ENCODE measurements at regions of chr5 and their contacts with region 1.

Region 1: DNA sequence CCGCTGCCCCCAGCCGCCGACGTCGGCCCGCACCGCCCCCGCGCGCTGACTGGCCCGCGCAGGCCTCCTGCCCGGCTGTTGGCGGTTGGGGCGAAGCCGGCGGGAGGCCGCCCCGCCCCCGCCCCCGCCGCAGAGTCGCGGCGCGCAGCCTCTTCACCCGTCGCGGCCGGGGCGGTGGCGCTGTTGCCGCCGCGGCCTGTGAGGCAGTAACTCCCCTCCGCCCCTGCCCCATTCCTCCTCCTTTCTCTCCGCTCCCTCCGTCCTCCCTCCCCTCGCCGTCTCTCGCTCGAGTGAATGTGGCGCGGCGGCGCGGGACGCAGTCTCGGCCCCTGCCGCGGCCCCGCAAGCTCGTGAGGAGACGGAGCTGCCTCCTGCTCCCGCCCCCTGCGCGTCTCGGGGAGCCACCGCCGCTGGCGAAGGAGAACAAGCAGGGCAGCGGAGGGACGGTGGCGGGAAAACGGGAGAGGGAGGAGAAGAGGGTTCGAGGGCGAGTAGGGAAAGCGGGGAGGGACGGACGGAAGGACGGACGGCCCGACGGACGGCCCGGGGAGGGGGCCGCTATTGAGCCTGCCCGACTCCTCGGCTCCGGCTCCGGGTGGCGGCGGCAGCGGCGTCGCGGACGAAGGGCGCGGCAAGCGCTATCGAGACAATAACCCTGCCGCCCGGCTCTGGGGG is 637 bp upstream of the ERBIN start:
- DNase-seq: peak; percentile 75
- H3K4me3 Mint-ChIP-seq: peak overlapping the region; percentile 87
- H3K27ac Mint-ChIP-seq: peak overlapping the region; percentile 88
- H3K4me1 Mint-ChIP-seq: peaks cover 18% of the 10 kb centered on the region
- H3K27me3 Mint-ChIP-seq: peaks cover 29% of the 10 kb centered on the region

Region 2: GRCh38 chr5:65624571-65625555 is 300.9 kb before region 1 on chr5 and contains the starts of genes SHLD3 and TRAPPC13:
- intact Hi-C with region 1: loop called (anchors 2 kb)
- DNase-seq: peak; percentile 78
- H3K4me3 Mint-ChIP-seq: peak within 1 kb of the TSS; percentile 99
- H3K27ac Mint-ChIP-seq: peak within 1 kb of the TSS; percentile 99
- H3K4me1 Mint-ChIP-seq: peaks cover 25% of the 10 kb centered on the region
- H3K27me3 Mint-ChIP-seq: no peaks in the 10 kb centered on the region
- total RNA-seq, gene SHLD3: 4.2 and 5.0 TPM in 2 replicates
- total RNA-seq, gene TRAPPC13: 17.0 and 22.4 TPM in 2 replicates

Region 3: DNA sequence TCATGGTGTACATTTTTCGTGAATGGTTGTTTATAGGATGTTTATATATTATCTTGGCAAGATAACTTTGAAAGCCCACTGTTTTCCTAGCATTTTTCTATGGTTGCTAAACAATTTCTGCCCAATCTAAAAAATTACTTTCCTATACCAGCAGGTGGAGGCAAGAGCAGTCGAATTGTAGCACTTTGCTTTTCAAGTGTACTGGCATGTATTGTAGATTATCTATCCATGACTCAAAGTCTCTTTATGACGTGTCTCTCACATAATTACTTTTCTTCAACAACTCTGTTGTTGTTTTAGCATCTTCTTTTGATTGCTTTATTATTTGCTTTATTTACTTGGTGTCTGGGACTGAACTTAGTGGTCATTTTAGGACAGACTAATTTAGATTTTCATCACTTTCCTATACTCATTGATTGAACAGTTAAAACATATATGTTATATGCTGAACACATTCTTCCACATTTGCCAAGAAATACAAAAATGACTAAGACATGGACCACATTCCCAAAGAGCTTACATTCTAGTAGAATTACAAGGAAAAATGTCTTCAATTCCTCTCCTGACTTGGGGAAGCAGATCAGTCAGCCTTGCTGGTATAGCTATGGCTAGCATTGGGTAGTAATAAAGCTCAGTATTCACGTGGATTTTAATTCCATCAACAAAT is 183.0 kb before region 1 on chr5:
- intact Hi-C with region 1: loop called (anchors 2 kb)
- DNase-seq: no peak
- H3K4me3 Mint-ChIP-seq: no peak overlapping the region
- H3K27ac Mint-ChIP-seq: no peak overlapping the region
- H3K4me1 Mint-ChIP-seq: peaks cover 12% of the 10 kb centered on the region
- H3K27me3 Mint-ChIP-seq: no peaks in the 10 kb centered on the region

Region 4: GRCh38 chr5:65801352-65801783 is 124.4 kb before region 1 on chr5:
- intact Hi-C with region 1: loop called (anchors 2 kb)
- DNase-seq: no peak
- H3K4me3 Mint-ChIP-seq: no peak overlapping the region
- H3K27ac Mint-ChIP-seq: no peak overlapping the region
- H3K4me1 Mint-ChIP-seq: peaks cover 38% of the 10 kb centered on the region
- H3K27me3 Mint-ChIP-seq: peaks cover 13% of the 10 kb centered on the region

Region 5: GRCh38 chr5:66010476-66010875 is 84.7 kb after region 1 on chr5:
- intact Hi-C with region 1: loop called (anchors 5 kb)
- DNase-seq: no peak
- H3K4me3 Mint-ChIP-seq: no peak overlapping the region
- H3K27ac Mint-ChIP-seq: no peak overlapping the region
- H3K4me1 Mint-ChIP-seq: peaks cover 30% of the 10 kb centered on the region
- H3K27me3 Mint-ChIP-seq: no peaks in the 10 kb centered on the region

Region 6: DNA sequence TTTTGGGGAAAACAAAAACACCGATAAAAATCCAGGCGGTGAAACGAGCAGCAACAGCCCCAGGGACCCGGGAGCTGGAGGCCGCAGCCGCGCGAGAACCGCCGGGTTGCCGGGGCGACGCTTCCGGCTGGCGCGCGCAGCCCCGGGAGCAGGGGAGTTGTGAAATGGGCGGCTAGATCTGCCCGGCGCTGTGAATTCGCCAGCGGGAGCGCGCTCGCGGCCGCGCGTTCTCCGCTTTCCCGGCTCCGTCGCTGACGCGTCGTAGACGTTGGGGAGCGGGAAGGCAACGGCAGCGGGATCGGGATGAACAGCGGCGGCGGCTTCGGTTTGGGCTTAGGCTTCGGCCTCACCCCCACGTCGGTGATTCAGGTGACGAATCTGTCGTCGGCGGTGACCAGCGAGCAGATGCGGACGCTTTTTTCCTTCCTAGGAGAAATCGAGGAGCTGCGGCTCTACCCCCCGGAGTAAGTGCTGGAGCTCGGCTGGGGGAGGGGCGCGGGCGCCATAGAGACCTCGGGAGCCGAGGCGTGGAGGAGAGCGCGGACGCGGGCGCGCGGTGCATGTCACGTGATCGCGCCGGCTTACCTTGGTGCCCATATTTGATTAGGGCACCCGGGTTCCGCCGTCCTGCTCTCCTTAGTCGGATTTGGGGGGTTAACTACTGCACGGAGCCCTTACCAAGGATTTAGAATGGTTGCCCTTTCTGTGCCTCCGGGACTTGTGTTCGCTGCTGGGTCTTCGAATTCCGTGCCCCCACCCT is 218.5 kb after region 1 on chr5 and contains the start of gene SREK1:
- intact Hi-C with region 1: loop called (anchors 1 kb)
- DNase-seq: peak; percentile 85
- H3K4me3 Mint-ChIP-seq: peak within 1 kb of the TSS; percentile 92
- H3K27ac Mint-ChIP-seq: peak within 1 kb of the TSS; percentile 99
- H3K4me1 Mint-ChIP-seq: peaks cover 37% of the 10 kb centered on the region
- H3K27me3 Mint-ChIP-seq: no peaks in the 10 kb centered on the region
- total RNA-seq, gene SREK1: 67.8 and 69.9 TPM in 2 replicates

Measured in activated T-helper 2 cell treated with anti-CD3 and anti-CD28 coated beads, Interferon-gamma antibody, Interleukin-2, Interleukin-4, amounts not matched to agents 10 μg/mL and 5 μg/mL and 100 μg/mL, durations not matched to agents 14 hours and 24 hours and 36 hours (primary cell).